ENCODE measurements at regions of chr4 and their contacts with region 1.

Region 1: DNA sequence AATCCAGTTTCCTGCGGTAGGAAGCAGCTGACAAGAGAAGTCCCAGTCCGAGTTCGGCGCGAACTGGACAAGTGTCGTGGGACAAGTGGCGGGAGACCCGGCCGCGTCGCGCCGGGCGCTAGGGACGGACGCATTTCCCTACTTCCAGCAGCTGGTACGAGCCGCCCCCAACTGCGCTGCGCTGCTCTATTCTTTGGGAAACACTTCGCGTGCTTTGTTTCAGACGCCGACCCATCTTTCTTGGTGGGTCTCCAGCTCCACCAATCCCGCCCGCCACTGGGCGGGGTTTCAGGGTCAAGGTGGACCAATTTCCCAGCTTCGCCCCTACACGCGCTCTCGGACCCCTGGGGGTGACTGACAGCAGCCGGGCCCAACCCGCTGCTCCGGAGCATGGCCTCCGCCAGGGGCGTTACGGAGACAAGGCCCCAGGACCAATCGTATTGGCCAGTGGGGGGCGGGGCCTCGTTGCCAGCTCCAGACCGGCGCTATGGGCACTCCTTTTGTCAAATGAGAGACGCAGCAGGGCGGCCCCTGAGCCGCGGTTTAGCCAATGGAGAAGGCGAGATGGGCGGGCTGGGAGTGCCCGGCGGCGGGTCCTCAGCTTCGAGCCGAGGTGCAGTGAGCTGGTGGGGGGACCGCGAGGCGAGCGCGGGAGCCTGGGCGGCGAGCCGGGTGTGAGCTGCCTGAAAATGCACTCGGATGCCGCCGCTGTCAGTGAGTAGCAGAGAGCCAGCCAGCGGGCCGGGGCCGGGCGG is at the start of gene DCUN1D4:
- DNase-seq: peak; percentile 97
- H3K4me3 ChIP-seq: peak within 1 kb of the TSS; percentile 62 to 93
- H3K4me3 Mint-ChIP-seq: peak within 1 kb of the TSS; percentile 95 to 99 (median 98)
- H3K27ac ChIP-seq: peak within 1 kb of the TSS; percentile 66
- H3K27ac Mint-ChIP-seq: peak within 1 kb of the TSS; percentile 94 to 97 (median 95)
- H3K4me1 ChIP-seq: peaks cover 12% of the 10 kb centered on the region
- H3K4me1 Mint-ChIP-seq: peaks cover 11 to 25% (median 19%) of the 10 kb centered on the region in 4 donors
- H3K27me3 ChIP-seq: no peaks in the 10 kb centered on the region
- H3K27me3 Mint-ChIP-seq: no peaks in the 10 kb centered on the region
- total RNA-seq, gene DCUN1D4: 54.0 to 58.9 TPM

Region 2: GRCh38 chr4:51820443-51821234 is 22.1 kb before region 1 on chr4:
- CTCF ChIA-PET with region 1: no interaction called
- POLR2A ChIA-PET with region 1: no interaction called
- intact Hi-C with region 1: no loop called
- DNase-seq: no peak
- H3K4me3 ChIP-seq: no peak overlapping the region
- H3K4me3 Mint-ChIP-seq: no peak overlapping the region
- H3K27ac ChIP-seq: no peak overlapping the region
- H3K27ac Mint-ChIP-seq: no peak overlapping the region
- H3K4me1 ChIP-seq: no peaks in the 10 kb centered on the region
- H3K4me1 Mint-ChIP-seq: no peaks in the 10 kb centered on the region
- H3K27me3 ChIP-seq: no peaks in the 10 kb centered on the region
- H3K27me3 Mint-ChIP-seq: peaks cover 1 to 2% of the 10 kb centered on the region in 2 donors

Region 3: DNA sequence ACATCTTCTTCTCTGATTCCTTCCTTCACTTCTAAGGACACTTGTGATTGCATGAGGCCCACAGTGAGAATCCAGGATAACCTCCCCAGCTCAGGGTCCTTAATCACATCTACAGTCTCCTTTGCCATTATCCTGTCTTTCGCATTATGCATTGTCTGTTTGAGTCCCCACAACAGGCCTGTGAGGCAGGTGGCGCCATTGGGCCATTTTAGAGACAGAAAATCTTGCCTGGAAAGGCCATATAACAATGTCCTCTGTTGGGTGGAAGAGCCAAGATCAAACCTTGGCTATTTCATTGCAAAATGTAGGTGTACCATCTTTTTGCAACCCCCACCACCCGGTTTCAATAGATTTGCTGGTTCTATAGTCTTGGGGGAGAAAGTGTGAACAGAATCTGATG is 11.6 kb before region 1 on chr4:
- CTCF ChIA-PET with region 1: interaction called, 27 read pairs
- POLR2A ChIA-PET with region 1: no interaction called
- intact Hi-C with region 1: no loop called
- DNase-seq: peak; percentile 48 to 64 (median 57)
- H3K4me3 ChIP-seq: no peak overlapping the region
- H3K4me3 Mint-ChIP-seq: no peak overlapping the region
- H3K27ac ChIP-seq: no peak overlapping the region
- H3K27ac Mint-ChIP-seq: no peak overlapping the region
- H3K4me1 ChIP-seq: no peaks in the 10 kb centered on the region
- H3K4me1 Mint-ChIP-seq: no peaks in the 10 kb centered on the region
- H3K27me3 ChIP-seq: no peaks in the 10 kb centered on the region
- H3K27me3 Mint-ChIP-seq: peaks cover 1 to 11% of the 10 kb centered on the region in 2 donors

Region 4: GRCh38 chr4:51895813-51896408 is 53.2 kb after region 1 on chr4:
- CTCF ChIA-PET with region 1: interaction called, 6 read pairs
- POLR2A ChIA-PET with region 1: no interaction called
- intact Hi-C with region 1: loop called (anchors 5 kb)
- DNase-seq: peak in 4 of 5 donors; percentile 22 to 39 (median 30)
- H3K4me3 ChIP-seq: no peak overlapping the region
- H3K4me3 Mint-ChIP-seq: no peak overlapping the region
- H3K27ac ChIP-seq: no peak overlapping the region
- H3K27ac Mint-ChIP-seq: peak overlapping the region in 1 of 7 donors; percentile 5
- H3K4me1 ChIP-seq: no peaks in the 10 kb centered on the region
- H3K4me1 Mint-ChIP-seq: peaks cover 0 to 4% (median 2%) of the 10 kb centered on the region in 4 donors
- H3K27me3 ChIP-seq: no peaks in the 10 kb centered on the region
- H3K27me3 Mint-ChIP-seq: no peaks in the 10 kb centered on the region

Region 5: DNA sequence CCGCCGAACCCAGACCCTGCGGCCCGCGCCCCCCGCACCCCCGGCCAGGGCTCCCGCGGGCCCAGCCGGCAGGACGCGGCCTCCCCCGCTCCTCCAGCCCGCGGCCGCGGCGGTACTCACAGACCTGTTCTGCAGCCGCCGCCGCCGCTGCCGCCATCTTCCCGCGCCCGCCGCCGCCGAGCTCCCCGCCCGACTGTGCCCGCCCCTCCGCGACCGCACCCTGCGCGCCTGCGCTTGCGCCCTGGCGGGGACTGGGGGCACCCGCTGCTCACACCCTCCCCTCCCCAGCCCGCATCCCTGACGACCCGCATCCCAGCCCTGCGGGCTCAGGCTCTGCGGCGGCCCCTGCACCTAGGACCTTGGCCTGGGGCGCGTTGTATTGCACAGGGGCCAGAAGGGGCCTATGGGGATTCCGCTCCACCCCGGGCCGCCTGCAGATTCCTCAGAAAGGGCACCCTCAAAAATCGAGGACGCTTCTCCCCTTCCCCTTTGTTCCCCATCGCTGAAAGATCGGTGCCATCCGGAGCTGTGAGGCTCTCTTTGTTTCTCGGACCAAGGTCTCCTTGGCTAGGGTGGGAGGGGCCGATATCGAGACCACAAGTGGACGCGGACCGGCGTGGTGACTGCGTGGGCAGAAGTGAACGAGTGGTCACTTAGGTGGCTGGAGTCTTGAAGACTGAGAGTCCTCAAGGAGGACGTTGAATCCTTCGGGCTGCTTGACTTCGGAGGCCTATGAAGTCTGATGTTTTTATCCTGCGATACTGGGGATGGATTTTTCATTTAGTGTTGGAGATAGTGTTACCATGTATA is 195.6 kb after region 1 on chr4 and contains the start of gene SGCB:
- CTCF ChIA-PET with region 1: interaction called, 7 read pairs
- POLR2A ChIA-PET with region 1: interaction called, 14 read pairs
- intact Hi-C with region 1: loop called (anchors 1 kb)
- DNase-seq: peak; percentile 64 to 75 (median 68)
- H3K4me3 ChIP-seq: peak within 1 kb of the TSS; percentile 5 to 57
- H3K4me3 Mint-ChIP-seq: peak within 1 kb of the TSS; percentile 84 to 91 (median 88)
- H3K27ac ChIP-seq: no peak within 1 kb of the TSS
- H3K27ac Mint-ChIP-seq: peak within 1 kb of the TSS in 5 of 7 donors; percentile 71 to 82 (median 75)
- H3K4me1 ChIP-seq: peaks cover 10% of the 10 kb centered on the region
- H3K4me1 Mint-ChIP-seq: peaks cover 21 to 36% (median 28%) of the 10 kb centered on the region in 4 donors
- H3K27me3 ChIP-seq: no peaks in the 10 kb centered on the region
- H3K27me3 Mint-ChIP-seq: peaks cover 2 to 10% of the 10 kb centered on the region in 2 donors
- total RNA-seq, gene SGCB: 7.4 to 7.5 TPM

Region 6: DNA sequence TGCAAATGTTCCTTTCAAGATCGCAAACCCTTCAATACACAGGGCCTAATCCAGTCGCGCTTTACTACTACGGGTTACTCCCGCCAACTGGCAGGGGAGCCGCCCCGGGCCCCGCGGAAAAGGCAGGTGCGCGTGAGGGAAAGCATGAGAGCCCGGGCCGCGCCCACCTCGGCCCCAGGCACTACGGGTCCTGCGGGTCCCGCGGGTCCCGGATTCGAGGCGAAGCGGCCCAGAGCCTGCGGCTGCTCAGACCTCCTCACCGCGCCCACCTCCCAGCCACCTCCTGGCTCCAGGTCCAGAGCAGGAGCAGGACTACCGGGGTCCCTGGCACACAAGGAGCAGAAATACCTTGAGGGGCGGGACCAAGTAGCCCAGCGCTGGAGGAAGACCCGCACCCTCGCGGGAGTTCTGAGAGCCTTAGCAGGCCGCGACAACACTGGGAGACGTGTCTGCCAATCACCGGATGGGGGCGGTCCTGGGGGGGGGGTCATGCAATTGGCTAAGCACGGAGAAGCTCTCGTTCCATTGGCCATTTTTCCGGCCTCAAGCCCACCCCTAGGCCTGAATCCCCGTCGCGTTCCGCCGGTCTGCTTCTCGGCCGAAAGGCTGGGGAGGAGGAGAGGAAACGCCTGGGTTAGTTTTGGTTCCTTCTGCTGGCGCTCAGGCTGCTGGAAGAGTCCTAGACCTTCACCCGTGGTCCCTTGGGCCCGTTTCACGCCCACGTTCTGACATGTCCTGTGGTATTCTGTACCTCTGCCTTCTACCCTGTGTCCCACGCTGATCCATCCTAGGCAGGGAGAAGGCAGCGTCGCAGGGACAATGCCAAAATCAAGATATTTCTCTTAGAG is 879.5 kb after region 1 on chr4:
- CTCF ChIA-PET with region 1: no interaction called
- POLR2A ChIA-PET with region 1: interaction called, 10 read pairs
- intact Hi-C with region 1: loop called (anchors 1 kb)
- DNase-seq: peak; percentile 84 to 93 (median 86)
- H3K4me3 ChIP-seq: peak overlapping the region; percentile 84 to 91
- H3K4me3 Mint-ChIP-seq: peak overlapping the region; percentile 64 to 90 (median 87)
- H3K27ac ChIP-seq: peak overlapping the region; percentile 79
- H3K27ac Mint-ChIP-seq: peak overlapping the region; percentile 81 to 94 (median 93)
- H3K4me1 ChIP-seq: peaks cover 9% of the 10 kb centered on the region
- H3K4me1 Mint-ChIP-seq: peaks cover 9 to 12% (median 11%) of the 10 kb centered on the region in 4 donors
- H3K27me3 ChIP-seq: no peaks in the 10 kb centered on the region
- H3K27me3 Mint-ChIP-seq: no peaks in the 10 kb centered on the region

Region 7: DNA sequence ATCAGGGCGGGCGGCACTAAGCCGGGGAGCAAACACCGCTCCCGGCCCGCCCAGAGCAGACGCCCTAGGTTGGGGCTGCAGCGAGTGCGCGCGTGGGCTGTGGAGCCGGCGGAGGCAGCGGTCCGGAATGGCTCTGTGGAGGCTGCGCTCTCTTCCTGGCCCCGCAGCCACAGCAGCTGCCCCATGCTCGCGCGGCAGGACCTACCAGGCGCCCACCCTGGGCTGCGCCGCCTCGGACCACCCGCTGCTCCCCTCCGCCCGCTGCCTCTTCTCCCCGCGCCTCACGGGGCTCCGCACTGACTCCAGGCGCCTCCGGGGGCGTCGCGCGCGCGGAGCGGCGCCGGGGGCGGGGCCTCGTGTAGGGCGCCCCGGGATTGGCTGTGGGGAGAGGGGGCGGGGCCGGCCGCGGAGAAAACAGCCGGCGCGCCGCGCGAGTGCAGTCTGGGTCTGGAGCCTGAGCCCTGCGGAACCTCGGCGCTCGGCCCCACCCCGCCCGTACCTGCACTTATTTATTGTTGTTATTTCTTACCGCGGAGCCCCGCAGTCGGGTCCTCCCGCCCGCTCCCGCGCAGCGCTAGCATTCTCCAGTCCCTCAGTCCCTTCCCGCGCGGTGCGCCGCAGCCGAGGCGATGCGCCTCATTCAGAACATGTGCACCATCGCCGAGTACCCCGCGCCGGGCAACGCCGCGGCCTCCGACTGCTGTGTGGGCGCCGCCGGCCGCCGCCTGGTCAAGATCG is 1019.3 kb after region 1 on chr4 and contains the start of gene RASL11B:
- CTCF ChIA-PET with region 1: no interaction called
- POLR2A ChIA-PET with region 1: no interaction called
- intact Hi-C with region 1: loop called (anchors 5 kb)
- DNase-seq: peak; percentile 75 to 87 (median 82)
- H3K4me3 ChIP-seq: peak within 1 kb of the TSS in 1 of 2 donors; percentile 51
- H3K4me3 Mint-ChIP-seq: peak within 1 kb of the TSS; percentile 80 to 86 (median 82)
- H3K27ac ChIP-seq: no peak within 1 kb of the TSS
- H3K27ac Mint-ChIP-seq: peak within 1 kb of the TSS in 3 of 7 donors; percentile 8 to 71 (median 36)
- H3K4me1 ChIP-seq: peaks cover 13% of the 10 kb centered on the region
- H3K4me1 Mint-ChIP-seq: peaks cover 3 to 11% (median 6%) of the 10 kb centered on the region in 4 donors
- H3K27me3 ChIP-seq: peaks cover 7% of the 10 kb centered on the region
- H3K27me3 Mint-ChIP-seq: peaks cover 24 to 33% of the 10 kb centered on the region in 2 donors
- total RNA-seq, gene RASL11B: not detected

Region 8: DNA sequence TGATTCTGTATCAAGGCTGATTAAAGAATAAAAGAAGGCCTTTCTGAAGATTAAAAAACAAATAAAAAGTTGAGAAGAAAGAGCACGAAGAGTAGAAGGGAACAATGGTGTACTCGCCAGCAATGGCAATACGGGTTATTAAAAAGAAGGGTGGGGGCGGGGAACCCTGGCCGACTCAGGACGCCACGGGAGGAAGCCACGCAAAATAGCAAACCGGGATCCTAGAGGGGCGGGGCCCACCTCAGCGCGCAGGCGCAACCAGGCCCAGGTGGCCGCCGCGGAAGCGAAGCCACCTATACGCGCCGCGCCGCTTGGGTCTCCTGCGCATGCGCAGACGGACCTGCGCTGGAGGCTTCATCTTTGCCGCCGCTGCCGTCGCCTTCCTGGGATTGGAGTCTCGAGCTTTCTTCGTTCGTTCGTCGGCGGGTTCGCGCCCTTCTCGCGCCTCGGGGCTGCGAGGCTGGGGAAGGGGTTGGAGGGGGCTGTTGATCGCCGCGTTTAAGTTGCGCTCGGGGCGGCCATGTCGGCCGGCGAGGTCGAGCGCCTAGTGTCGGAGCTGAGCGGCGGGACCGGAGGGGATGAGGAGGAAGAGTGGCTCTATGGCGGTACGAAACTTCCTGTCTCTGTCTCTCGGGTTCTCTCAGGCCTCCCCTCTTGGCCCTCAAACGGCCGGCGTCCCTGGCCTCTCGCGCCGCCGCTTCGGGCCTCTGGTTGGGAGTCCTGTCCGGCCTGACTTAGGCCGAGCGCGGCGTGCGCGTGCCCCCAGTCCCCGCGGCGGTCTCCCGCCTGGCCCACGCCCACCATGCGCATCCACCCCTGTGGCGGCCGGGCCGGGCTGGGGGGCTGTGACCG is 1534.8 kb after region 1 on chr4 and contains the start of gene FIP1L1:
- CTCF ChIA-PET with region 1: no interaction called
- POLR2A ChIA-PET with region 1: no interaction called
- intact Hi-C with region 1: loop called (anchors 2 kb)
- DNase-seq: peak; percentile 93 to 97 (median 95)
- H3K4me3 ChIP-seq: peak within 1 kb of the TSS; percentile 71 to 89
- H3K4me3 Mint-ChIP-seq: peak within 1 kb of the TSS; percentile 98 to 100 (median 99)
- H3K27ac ChIP-seq: peak within 1 kb of the TSS; percentile 92
- H3K27ac Mint-ChIP-seq: peak within 1 kb of the TSS; percentile 97 to 100 (median 99)
- H3K4me1 ChIP-seq: peaks cover 37% of the 10 kb centered on the region
- H3K4me1 Mint-ChIP-seq: peaks cover 19 to 53% (median 34%) of the 10 kb centered on the region in 4 donors
- H3K27me3 ChIP-seq: no peaks in the 10 kb centered on the region
- H3K27me3 Mint-ChIP-seq: no peaks in the 10 kb centered on the region
- total RNA-seq, gene FIP1L1: 73.0 to 90.7 TPM

Measured in CD4-positive, alpha-beta memory T cell (primary cell).